ENCODE measurements at regions of chr19 and their contacts with region 1.

Region 1: DNA sequence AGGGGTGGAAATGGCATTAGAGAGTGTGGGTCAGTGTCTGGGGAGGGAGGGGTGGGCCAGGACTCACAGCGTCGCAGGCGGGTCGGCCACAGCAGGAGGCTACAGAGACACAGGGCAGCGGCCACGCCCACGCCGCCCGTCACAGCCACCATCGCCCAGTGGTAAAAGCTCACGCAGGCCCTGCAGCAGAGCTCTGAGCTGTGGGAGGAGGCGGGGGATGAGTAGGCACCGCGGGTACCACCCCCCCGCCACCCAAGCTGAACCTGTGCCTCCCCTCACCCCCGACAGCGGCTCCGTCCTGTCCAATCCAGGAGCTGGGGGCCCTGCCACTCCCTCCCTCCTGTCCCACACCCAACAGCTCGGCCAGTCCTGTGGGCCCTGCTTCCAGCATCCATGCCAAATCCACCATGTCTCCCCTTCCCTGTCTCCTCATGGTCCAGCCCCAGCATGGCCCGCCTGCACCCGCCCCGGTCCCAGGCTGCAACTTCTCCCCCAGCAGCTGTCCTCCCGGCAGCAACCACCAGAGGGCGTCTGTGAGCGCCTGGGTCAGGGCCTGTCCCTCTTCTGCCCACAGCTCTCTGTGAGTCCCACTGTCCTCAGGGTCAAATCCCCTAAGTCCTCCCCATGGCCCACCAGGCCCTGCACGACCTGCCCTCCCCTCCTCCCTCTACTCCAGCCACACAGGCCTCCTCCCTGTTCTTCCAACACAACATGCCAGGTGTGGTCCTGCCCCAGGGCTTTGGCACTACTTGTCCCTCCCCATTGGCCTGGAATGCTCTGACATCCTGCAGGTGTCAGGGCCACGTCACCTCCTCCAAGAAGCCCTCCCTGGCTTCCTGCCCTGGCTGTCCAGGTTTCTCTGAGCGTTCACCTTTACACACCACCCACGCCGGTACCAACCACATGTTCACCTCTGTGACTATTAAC is 6.0 kb downstream of the TEKTIP1 start:
- DNase-seq: peak; percentile 62 to 79 (median 70)
- ATAC-seq: peak; percentile 53
- H3K4me3 ChIP-seq: no peak overlapping the region
- H3K27ac ChIP-seq: no peak overlapping the region
- H3K4me1 ChIP-seq: peaks cover 13% of the 10 kb centered on the region
- H3K27me3 ChIP-seq: no peaks in the 10 kb centered on the region
- CTCF ChIP-seq: peak; percentile 74 to 92 (median 87)
- POLR2A ChIP-seq: no peak

Region 2: DNA sequence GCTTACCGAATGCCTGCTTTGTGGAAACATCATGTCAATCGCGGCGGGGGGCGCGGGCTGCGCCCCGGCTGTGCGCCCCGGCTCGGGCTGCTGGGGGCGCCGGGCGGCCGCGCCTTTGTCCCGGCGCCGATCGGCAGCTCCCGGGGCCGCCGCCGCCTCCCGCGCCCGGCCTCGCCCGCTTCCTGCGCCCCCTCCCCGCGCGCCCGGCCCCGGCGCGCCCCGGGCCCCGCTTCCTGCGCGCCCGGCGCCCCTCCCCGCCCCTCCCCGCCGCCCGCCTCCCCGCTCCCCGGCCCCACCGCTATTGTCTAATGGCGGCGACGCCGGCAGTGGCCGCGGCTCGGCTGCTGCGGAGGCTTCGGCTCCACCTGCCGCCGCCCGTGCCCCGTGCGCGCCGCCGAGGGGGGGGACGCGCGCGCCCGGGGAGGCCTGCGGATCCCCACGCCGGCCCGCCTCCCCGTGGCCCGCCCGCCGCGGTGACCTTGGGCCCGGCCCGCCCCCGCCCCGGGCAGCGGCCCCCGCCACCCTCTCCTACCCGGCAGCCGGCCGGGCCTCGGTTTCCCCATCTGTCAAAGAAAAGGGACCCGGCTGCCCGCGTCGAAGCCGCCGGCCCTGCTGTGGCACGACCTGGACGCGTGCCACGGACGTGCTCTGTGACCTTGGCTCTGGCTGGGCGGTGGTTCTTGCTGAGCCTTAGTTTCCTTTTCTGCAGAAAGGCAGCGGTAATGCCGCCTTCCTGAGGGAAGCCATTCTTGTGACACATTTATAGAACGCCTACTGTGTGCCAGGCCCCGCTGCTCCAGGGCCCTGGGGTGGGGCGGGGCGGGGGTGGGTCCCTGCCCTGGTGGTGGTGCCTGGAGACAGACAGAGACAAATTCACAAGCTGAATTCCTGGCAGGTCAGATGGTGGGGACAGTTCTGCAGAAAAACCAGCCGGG is 482.6 kb before region 1 on chr19 and contains the start of gene TLE5:
- intact Hi-C with region 1: no loop called
- DNase-seq: peak; percentile 67 to 85 (median 82)
- ATAC-seq: peak; percentile 67
- H3K4me3 ChIP-seq: peak within 1 kb of the TSS; percentile 31 to 98
- H3K27ac ChIP-seq: peak within 1 kb of the TSS; percentile 90 to 98 (median 96)
- H3K4me1 ChIP-seq: peaks cover 67% of the 10 kb centered on the region
- H3K27me3 ChIP-seq: no peaks in the 10 kb centered on the region
- CTCF ChIP-seq: peak in 1 of 7 experiments; percentile 5
- POLR2A ChIP-seq: no peak
- total RNA-seq, gene TLE5: 166 to 254 TPM

Region 3: GRCh38 chr19:3324321-3324856 is 220.6 kb before region 1 on chr19:
- intact Hi-C with region 1: no loop called
- DNase-seq: peak; percentile 57 to 74 (median 68)
- ATAC-seq: peak; percentile 38
- H3K4me3 ChIP-seq: no peak overlapping the region
- H3K27ac ChIP-seq: no peak overlapping the region
- H3K4me1 ChIP-seq: no peaks in the 10 kb centered on the region
- H3K27me3 ChIP-seq: peaks cover 0 to 10% of the 10 kb centered on the region in 2 donors
- CTCF ChIP-seq: peak; percentile 40 to 78 (median 61)
- POLR2A ChIP-seq: no peak

Region 4: DNA sequence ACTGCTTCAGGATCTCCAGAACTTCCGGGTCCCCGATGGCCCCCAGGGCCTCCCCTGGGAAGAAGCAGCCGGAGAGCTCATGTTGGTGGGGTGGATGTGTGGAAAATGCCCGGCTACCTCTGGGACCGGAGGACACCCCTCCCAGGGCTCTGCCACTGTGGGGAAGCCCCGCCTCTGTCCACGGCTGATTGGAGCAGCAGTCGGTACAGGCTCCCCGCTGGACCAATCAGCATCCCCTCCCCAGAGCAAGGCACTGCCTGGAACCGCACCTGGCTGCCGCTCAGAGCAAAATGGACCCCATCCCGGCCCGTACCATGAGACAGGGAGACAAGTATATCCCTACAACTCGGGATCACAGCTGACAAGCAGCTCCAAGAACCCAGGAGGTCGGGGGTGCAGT is 51.0 kb before region 1 on chr19:
- intact Hi-C with region 1: no loop called
- DNase-seq: no peak
- ATAC-seq: no peak
- H3K4me3 ChIP-seq: no peak overlapping the region
- H3K27ac ChIP-seq: no peak overlapping the region
- H3K4me1 ChIP-seq: peaks cover 3% of the 10 kb centered on the region
- H3K27me3 ChIP-seq: no peaks in the 10 kb centered on the region
- CTCF ChIP-seq: no peak
- POLR2A ChIP-seq: no peak

Region 5: DNA sequence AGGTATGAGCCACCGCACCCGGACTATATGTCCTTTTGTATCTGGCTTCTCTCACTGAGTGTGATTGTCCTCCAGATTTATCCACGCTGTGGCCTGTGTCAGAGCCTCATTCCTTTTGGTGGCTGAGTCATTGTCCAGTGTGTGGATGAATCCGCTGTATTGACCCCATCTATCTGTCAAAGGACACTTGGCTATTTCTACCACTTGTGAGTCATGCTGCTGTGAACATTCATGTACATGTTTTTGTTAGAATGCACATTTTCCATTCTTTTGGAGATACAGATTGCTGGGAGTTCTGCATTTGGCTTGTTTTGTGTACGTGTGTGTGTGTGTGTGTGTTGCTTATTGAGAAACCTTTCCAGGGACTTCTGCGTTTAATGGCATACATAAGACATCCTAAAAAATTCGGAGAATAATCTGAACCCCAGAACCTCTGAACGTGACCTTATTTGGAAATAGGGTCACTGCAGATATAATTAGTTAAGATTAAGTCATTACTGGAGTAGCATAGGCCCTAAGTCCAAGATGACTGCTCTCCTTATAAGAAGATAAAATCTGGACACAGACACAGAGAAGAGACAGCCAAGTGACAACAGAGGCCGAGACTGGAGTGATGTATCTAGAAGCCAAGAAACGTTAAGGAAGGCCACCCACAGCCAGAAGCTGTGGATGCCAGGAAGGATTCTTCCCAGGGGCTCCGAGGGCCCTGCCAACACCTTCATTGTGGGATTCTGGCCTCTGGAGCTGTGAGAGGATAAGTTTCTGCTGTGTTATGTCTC is 35.3 kb after region 1 on chr19:
- intact Hi-C with region 1: loop called (anchors 5 kb)
- DNase-seq: peak in 1 of 4 donors; percentile 40
- ATAC-seq: peak; percentile 32
- H3K4me3 ChIP-seq: no peak overlapping the region
- H3K27ac ChIP-seq: no peak overlapping the region
- H3K4me1 ChIP-seq: peaks cover 3% of the 10 kb centered on the region
- H3K27me3 ChIP-seq: peaks cover 0 to 3% of the 10 kb centered on the region in 2 donors
- CTCF ChIP-seq: no peak
- POLR2A ChIP-seq: no peak

Region 6: GRCh38 chr19:3642987-3643673 is 98.1 kb after region 1 on chr19:
- intact Hi-C with region 1: no loop called
- DNase-seq: no peak
- ATAC-seq: no peak
- H3K4me3 ChIP-seq: no peak overlapping the region
- H3K27ac ChIP-seq: no peak overlapping the region
- H3K4me1 ChIP-seq: no peaks in the 10 kb centered on the region
- H3K27me3 ChIP-seq: no peaks in the 10 kb centered on the region
- CTCF ChIP-seq: no peak
- POLR2A ChIP-seq: no peak